ENCODE measurements at regions of chr6 and their contacts with region 1.

Region 1: DNA sequence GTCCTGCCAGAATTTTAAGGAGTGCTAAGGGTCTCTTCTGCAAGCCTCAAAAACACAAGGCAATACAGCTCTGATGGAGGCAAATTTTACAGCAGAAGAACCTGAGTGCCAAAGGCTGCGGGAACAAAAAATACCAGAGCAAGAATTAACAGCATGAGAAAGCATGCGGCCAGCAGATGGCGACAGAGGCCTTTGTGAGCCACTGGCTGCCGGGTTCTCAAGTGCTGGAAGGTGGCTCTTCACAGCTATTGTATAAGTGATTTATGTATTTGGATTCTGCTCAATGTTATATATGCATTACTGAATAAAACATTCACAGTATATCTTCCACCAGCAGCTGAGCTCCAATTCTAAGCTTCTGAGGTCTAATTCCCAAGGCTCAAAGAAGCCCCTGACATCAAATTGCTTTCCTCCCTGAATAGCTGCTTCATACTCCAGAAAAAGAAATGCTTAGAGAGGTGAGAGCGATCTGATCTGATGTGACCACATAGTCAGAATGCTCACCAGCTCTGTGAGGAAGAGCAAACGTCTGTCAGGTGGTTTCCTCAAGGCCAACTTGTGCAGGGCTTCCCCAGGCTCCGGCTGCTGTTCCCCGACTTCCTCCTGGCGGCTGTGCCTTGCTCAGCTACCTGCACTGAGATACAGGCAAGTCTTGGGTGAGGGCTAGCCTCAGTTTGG is 58.6 kb downstream of the PPP1R3G start:
- DNase-seq: peak; percentile 4
- H3K4me3 ChIP-seq: no peak overlapping the region
- H3K27ac ChIP-seq: no peak overlapping the region
- H3K4me1 ChIP-seq: no peaks in the 10 kb centered on the region
- H3K27me3 ChIP-seq: no peaks in the 10 kb centered on the region
- CTCF ChIP-seq: peak; percentile 80 to 91 (median 88)
- POLR2A ChIP-seq: no peak

Region 2: DNA sequence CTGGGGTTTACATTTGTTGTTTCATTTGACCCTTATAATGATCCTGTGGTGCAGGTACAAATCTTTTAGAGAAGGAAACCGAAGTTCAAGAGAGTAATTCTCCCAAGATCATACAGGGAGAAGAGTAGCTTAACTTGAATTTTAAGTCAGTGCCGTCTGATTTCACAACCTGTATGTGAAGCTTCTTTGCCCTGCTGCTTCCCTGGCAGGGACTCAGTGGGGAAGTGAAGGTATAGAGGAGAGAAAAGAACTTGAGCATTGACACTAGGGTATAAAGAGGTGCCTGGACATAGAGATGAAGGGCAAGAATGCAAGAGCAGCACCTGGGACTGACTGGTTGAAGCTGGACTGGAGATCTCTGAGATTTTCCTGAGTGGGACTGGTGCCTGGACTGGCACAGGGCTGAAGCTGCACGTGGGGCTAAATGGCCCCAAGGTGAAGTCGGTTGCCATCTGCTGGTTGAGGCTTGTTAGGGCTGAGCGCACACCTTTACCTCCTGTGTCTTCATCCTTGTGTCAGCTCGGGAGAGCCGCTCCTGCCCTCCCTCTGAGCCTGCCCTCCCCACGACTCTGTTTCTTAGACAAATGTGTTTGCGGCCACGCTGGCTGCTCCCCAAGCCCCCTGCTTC is 159.3 kb after region 1 on chr6:
- intact Hi-C with region 1: loop called (anchors 10 kb)
- DNase-seq: no peak
- H3K4me3 ChIP-seq: no peak overlapping the region
- H3K27ac ChIP-seq: no peak overlapping the region
- H3K4me1 ChIP-seq: peaks cover 0 to 16% (median 3%) of the 10 kb centered on the region in 3 donors
- H3K27me3 ChIP-seq: no peaks in the 10 kb centered on the region
- CTCF ChIP-seq: peak; percentile 20 to 77 (median 60)
- POLR2A ChIP-seq: no peak

Region 3: DNA sequence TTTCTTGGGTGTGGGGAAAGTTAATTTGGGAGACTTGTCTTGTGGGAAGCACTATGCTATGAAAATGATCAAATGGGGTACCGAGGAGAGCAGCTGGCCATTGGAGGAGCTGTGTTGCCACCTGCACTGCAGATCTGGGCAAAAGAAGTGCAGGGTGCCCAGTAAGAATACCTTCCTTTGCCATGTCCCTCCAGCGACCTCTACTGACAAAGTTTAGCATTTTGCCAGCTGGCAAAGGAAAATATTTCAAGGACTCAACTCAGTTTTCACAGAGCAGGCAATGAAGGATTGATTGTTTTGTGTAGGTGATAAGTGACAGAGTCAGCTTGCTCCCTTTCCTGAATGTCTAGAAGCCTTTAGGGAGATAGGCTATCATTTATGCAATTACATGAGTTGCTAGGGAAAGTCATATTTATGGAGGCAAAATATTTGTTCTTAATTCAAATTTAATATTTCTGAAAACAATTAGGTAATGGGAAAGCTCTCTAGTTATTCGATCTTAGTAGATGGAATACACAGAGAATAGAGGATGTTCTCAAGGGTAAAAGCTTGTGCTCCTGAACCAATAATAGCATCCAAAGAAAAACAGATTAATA is 236.0 kb after region 1 on chr6:
- intact Hi-C with region 1: loop called (anchors 10 kb)
- DNase-seq: no peak
- H3K4me3 ChIP-seq: no peak overlapping the region
- H3K27ac ChIP-seq: no peak overlapping the region
- H3K4me1 ChIP-seq: no peaks in the 10 kb centered on the region
- H3K27me3 ChIP-seq: no peaks in the 10 kb centered on the region
- CTCF ChIP-seq: peak in 4 of 6 experiments; percentile 29 to 65 (median 44)
- POLR2A ChIP-seq: no peak

Measured in esophagus squamous epithelium (tissue), 5 donors.